SK-N-SH (cell line): ENCODE measurements at regions of chr20 and their contacts with region 1.

Region 1: DNA sequence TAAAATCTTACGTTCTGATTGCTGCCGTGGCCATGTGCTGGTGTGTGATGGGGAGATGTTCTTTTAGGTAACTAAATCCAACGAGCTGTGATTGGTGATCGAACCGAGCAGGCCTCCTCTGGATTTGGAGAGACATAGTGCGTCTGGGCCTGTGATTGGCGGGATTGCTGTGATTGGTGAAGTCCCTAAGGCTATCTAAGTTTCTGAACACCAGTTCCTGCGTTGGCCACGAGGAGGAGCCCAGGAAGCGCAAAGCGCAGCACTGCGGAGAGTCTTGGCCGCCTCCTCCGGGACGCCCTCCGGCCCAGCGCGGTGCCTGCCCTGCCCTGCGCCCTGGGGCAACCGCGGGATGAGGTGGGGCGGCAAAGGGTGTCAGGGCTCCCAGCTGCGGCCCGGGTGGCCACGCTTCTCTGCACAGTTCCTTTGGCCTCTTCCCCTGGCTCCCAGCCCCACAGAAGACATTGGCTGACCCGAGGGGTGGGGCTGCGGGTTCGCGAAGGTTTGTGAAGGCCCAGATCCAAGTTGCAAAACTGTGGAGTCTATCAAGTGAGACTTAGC is 33.0 kb downstream of the HNF4A start:
- DNase-seq: peak; percentile 85
- H3K4me3 ChIP-seq: no peak overlapping the region
- H3K27ac ChIP-seq: no peak overlapping the region
- H3K4me1 ChIP-seq: peaks cover 0 to 2% of the 10 kb centered on the region in 2 experiments; a peak in 1 of 4 replicates
- H3K27me3 ChIP-seq: no peaks in the 10 kb centered on the region; the same call in 1 of the 2 replicates
- CTCF ChIP-seq: peak; percentile 76
- EP300 ChIP-seq: no peak
- RAD21 ChIP-seq: peak; percentile 80

Region 2: GRCh38 chr20:44142413-44142812 is 246.1 kb before region 1 on chr20:
- CTCF ChIA-PET with region 1: no interaction called
- POLR2A ChIA-PET with region 1: no interaction called
- DNase-seq: no peak
- H3K4me3 ChIP-seq: no peak overlapping the region
- H3K27ac ChIP-seq: no peak overlapping the region
- H3K4me1 ChIP-seq: no peaks in the 10 kb centered on the region
- H3K27me3 ChIP-seq: no peaks in the 10 kb centered on the region
- CTCF ChIP-seq: no peak
- EP300 ChIP-seq: no peak
- RAD21 ChIP-seq: no peak

Region 3: GRCh38 chr20:44217342-44218092 is 171.0 kb before region 1 on chr20:
- CTCF ChIA-PET with region 1: interaction called, 89 read pairs
- POLR2A ChIA-PET with region 1: interaction called, 3 read pairs
- DNase-seq: peak; percentile 62
- H3K4me3 ChIP-seq: no peak overlapping the region; a peak in 1 of 4 replicates
- H3K27ac ChIP-seq: no peak overlapping the region
- H3K4me1 ChIP-seq: peaks cover 0 to 9% of the 10 kb centered on the region in 2 experiments; a peak in 1 of 4 replicates
- H3K27me3 ChIP-seq: no peaks in the 10 kb centered on the region
- CTCF ChIP-seq: peak; percentile 84
- EP300 ChIP-seq: no peak
- RAD21 ChIP-seq: peak; percentile 92

Region 4: DNA sequence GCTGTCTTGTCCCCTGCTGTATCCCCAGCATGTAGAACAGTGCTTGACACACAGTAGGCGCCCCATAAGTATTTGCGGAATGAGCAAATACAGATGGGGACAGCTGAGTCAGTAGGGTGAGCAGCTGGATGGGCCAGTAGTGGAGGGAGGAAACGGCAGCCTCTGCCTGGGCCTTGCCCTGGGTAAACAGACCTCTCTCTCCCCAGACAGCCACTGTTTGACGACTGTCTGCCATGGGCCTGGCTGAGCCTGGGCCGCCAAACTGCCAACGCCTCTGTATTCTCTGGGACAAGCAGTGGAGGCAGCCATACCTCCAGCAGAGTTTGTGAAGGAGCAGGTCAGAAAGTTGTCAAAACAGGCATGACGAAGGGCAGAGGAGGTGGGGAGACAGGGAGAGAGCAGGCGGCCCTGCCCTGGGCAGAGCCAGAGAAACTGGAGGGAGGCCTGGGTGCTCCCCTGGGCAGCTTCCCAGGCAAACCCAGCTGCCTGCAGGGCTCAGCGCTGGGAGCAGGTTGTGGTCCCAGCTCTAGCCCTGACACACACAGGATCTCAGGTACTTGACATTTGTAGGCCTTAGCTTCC is 17.8 kb before region 1 on chr20:
- CTCF ChIA-PET with region 1: interaction called, 25 read pairs
- POLR2A ChIA-PET with region 1: no interaction called
- DNase-seq: no peak
- H3K4me3 ChIP-seq: no peak overlapping the region
- H3K27ac ChIP-seq: no peak overlapping the region
- H3K4me1 ChIP-seq: no peaks in the 10 kb centered on the region
- H3K27me3 ChIP-seq: peaks cover 8% of the 10 kb centered on the region; the same call in 1 of the 2 replicates
- CTCF ChIP-seq: no peak
- EP300 ChIP-seq: no peak
- RAD21 ChIP-seq: no peak

Region 5: DNA sequence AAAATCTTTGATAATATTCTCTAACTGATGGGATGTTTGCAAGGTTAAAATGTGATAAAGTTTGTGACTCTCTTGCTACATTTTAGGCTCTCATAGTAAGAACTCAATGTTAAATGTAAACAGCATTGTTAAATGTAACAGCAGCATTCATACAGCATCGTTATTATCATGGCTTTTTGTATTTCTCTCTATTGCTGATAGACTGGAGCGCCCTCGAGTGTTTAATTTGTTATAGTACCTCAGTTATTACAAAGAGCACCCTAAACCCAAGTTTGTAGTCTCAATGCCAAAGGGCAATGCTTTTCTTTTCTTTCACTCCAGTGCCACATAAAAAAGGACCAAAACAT is 72.2 kb after region 1 on chr20:
- CTCF ChIA-PET with region 1: interaction called, 57 read pairs
- POLR2A ChIA-PET with region 1: no interaction called
- DNase-seq: peak; percentile 57
- H3K4me3 ChIP-seq: no peak overlapping the region
- H3K27ac ChIP-seq: no peak overlapping the region
- H3K4me1 ChIP-seq: peaks cover 0 to 4% of the 10 kb centered on the region in 2 experiments; a peak in 1 of 4 replicates
- H3K27me3 ChIP-seq: no peaks in the 10 kb centered on the region
- CTCF ChIP-seq: peak; percentile 67
- EP300 ChIP-seq: no peak
- RAD21 ChIP-seq: peak; percentile 84

Region 6: DNA sequence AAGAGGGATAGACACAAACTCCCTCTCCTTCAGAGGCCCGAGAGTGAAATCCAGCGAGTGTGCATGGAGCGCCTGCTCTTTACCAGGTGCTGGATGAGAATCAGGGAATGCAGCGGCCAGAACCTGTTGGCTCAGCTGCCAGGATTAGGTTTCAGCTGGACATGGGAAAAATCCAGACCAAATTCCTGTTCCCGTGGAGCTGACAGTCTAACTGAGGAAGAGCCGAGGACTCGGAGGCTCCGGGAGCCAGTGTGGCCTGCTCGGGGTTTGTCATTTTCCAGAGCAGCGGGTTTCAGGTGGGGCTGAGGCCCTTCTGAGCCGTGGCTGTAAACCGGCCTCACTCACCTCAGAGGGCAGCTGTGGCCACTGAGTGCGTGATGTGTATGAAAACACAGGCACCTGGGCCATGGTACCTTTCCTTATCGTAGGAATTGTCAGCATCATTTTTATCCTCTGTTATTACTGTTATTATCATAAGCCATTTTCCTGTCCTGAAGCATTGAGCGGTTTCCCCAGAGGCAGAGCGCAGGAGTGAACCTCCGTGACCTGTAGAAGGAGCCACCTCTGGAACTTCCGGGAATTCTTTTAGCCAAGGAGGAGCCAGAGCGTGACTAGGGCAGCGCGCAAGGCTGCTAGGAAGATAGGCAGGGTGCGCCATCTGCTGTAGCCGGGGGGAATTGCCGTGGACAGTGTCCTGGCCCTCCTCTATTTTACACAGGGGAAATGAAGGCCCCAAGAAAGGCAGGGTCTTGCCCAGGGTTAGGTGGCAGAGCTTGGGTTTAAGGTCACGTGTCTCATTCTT is 221.2 kb after region 1 on chr20:
- CTCF ChIA-PET with region 1: interaction called, 24 read pairs
- POLR2A ChIA-PET with region 1: no interaction called
- DNase-seq: peak; percentile 87
- H3K4me3 ChIP-seq: peak overlapping the region in 1 of 2 experiments; percentile 13; a peak in 1 of 4 replicates
- H3K27ac ChIP-seq: peak overlapping the region; percentile 55 to 65
- H3K4me1 ChIP-seq: peaks cover 0 to 10% of the 10 kb centered on the region in 2 experiments; a peak in 1 of 4 replicates
- H3K27me3 ChIP-seq: no peaks in the 10 kb centered on the region
- CTCF ChIP-seq: peak; percentile 98
- EP300 ChIP-seq: no peak
- RAD21 ChIP-seq: peak; percentile 99

Region 7: DNA sequence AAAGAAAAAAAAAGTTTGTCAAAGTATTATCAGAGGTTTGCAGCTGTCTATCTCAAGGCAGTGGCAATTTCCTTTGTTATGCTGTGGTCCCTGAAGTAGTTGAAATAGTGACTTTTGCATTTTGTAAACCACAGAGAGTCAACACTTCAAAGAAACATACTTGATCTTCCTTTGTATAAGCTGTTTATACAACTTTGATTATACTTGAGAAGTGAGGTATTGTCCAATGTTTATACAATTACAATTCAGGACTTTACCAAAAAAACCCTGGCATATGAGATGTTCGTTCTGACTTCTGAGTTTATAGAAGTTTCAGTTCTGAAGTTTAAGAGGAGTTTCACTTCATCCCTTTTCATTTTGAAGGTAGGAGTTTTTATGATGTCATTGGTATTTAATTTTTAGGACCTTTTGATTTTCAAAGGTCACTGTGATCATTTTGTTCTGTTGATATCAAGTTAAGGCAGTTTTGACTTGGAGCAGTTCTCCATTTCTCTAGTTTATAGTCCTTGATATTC is 581.8 kb after region 1 on chr20:
- CTCF ChIA-PET with region 1: no interaction called
- POLR2A ChIA-PET with region 1: no interaction called
- DNase-seq: no peak
- H3K4me3 ChIP-seq: no peak overlapping the region
- H3K27ac ChIP-seq: no peak overlapping the region
- H3K4me1 ChIP-seq: peaks cover 17 to 20% of the 10 kb centered on the region in 2 experiments; a peak in 3 of 4 replicates
- H3K27me3 ChIP-seq: no peaks in the 10 kb centered on the region
- CTCF ChIP-seq: no peak
- EP300 ChIP-seq: no peak
- RAD21 ChIP-seq: no peak